ENCODE measurements at regions of chr10 and their contacts with region 1.

Region 1: DNA sequence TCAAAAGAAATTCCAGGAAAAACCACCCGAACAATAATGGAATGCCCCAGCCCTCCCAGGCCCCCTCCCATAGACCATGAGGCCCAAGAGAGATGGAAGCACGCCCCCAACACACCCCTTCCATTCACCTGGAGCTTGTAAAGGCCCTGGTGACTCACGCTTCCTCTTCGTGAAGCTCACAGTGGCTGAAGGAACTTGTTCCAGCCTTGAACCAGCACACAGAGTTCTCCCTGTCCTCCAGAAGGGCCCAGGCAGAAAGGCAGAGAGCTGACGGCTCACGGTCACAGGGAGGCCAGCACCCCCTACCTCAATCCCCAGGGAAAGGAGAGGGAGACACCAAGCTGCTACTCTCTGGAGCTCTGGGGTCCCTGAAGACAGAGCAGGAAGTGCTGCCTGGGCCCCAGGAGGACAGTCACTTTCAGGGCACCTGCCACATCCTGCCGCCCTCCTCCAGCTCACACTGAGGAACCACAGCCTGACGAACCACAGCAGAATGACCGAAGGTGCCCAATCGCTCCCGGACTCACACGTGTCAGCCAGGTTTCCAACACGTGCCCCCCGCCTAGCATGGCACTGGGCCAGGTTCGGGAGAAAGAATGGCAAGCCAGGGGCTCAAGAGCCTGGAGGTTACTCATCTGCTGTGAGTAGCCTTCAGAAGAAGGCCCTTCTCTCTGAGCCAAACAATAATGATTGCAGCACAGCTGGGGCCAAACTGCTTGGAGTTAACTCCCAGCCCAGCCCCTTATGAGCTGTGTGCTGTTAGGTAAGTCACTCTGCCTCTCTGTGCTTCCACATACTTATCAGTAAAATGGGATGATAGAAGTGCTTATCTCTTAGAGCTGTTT is 52.8 kb downstream of the DLG5 start:
- DNase-seq: peak; percentile 58
- H3K4me3 ChIP-seq: no peak overlapping the region
- H3K27ac ChIP-seq: peak overlapping the region; percentile 38
- H3K4me1 ChIP-seq: peaks cover 22% of the 10 kb centered on the region
- H3K27me3 ChIP-seq: no peaks in the 10 kb centered on the region
- CTCF ChIP-seq: no peak
- POLR2A ChIP-seq: no peak

Region 2: DNA sequence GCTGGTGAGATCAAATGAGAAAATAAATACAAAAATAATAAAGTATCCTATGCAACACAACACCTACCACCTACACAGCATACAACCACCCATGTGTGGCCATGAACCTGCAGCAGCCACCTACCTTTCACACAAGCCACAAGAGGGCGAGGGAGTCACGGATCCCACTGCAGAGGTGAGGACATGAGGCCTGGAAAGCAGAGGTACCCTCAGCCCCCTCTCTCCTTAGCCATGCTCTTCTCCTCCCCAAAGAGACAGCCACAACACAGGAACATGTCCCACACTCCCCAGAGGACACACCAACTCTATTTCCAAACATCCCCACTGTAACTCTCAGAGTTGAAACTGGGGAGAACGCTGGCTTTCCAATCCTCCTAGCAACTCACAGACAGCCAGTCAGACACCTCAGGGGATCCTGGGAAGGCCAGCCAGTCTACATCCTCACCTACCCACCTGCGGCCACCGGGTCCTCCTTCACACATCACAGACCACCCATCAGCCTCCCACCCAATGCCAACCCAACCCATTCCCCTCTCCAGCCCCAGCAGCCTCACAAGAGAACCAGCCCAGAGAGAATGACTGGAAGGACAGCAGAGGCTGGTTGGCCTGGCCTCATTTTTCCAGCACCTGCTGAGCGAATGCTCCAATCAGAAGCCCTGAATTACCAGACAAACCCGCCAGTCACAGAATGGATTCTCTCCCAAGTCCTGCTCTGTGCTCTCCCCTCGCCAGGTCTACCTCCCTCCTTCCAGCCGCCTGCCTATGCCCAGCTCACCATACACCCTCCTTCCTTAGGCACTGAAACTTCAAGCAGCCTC is 34.4 kb after region 1 on chr10:
- CTCF ChIA-PET with region 1: interaction called, 10 read pairs
- POLR2A ChIA-PET with region 1: no interaction called
- dilution Hi-C with region 1: no loop called
- intact Hi-C with region 1: no loop called
- DNase-seq: no peak
- H3K4me3 ChIP-seq: no peak overlapping the region
- H3K27ac ChIP-seq: no peak overlapping the region
- H3K4me1 ChIP-seq: peaks cover 9% of the 10 kb centered on the region
- H3K27me3 ChIP-seq: no peaks in the 10 kb centered on the region
- CTCF ChIP-seq: no peak
- POLR2A ChIP-seq: no peak

Region 3: GRCh38 chr10:77926566-77927401 is 53.0 kb after region 1 on chr10 and contains the start of gene DLG5:
- CTCF ChIA-PET with region 1: no interaction called
- POLR2A ChIA-PET with region 1: no interaction called
- dilution Hi-C with region 1: no loop called
- intact Hi-C with region 1: loop called (anchors 2 kb)
- DNase-seq: peak; percentile 26
- H3K4me3 ChIP-seq: peak within 1 kb of the TSS; percentile 47 to 75 (median 53)
- H3K27ac ChIP-seq: no peak within 1 kb of the TSS
- H3K4me1 ChIP-seq: peaks cover 14% of the 10 kb centered on the region
- H3K27me3 ChIP-seq: peaks cover 21 to 26% of the 10 kb centered on the region in 2 experiments
- CTCF ChIP-seq: no peak
- POLR2A ChIP-seq: peak; percentile 40
- total RNA-seq, gene DLG5: 23.1 and 24.9 TPM in 2 replicates

Measured in endothelial cell of umbilical vein (primary cell).